ENCODE measurements at regions of chr6 and their contacts with region 1.

Region 1: DNA sequence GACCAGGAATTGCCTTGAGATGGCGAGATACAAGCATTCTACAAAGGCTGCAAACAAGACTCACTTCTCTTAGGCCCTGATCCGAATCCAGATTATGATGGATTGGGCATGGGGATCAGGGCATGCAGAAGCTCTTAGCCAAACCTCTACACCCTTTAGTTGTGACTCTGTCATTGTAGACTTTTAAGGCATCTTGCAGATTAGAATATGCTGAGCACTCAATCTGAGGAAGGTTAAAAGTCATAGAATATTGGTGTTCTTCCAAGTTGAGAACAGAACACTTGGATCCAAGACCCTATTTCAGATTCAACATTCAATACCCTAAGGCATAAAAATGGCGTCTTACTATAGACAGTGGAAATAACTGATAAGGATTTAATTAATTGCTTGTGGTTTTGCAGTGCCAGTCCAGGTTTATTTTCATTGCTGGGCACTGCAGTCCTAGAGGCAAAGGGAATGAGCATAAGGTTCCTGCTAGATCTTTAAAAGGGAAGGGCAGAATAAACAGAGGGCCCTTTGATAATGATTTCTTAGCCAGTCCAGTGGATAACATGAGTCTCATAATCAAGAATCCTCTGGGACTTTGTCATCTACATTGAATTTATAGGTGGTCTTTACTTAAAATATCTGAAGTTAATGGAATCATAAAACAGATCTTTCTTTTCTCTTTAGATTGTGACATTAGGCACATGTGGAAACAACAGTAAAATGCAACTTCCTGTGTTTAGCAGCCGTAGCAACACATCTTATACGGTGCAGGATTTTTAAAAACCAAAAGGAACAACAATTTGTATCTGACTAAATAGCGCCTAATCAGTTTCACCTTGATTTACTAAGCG is 17.6 kb downstream of the PHACTR2 start:
- DNase-seq: no peak
- ATAC-seq: peak; percentile 33

Region 2: GRCh38 chr6:143620447-143620846 is 74.9 kb before region 1 on chr6:
- intact Hi-C with region 1: no loop called
- DNase-seq: no peak
- ATAC-seq: no peak

Region 3: GRCh38 chr6:143759666-143760065 is 64.3 kb after region 1 on chr6:
- intact Hi-C with region 1: loop called (anchors 10 kb)
- DNase-seq: no peak
- ATAC-seq: peak; percentile 27

Region 4: GRCh38 chr6:143782481-143782880 is 87.1 kb after region 1 on chr6:
- intact Hi-C with region 1: no loop called
- DNase-seq: no peak
- ATAC-seq: no peak